PC-9 (cell line): ENCODE measurements at regions of chr2 and their contacts with region 1.

Region 1: DNA sequence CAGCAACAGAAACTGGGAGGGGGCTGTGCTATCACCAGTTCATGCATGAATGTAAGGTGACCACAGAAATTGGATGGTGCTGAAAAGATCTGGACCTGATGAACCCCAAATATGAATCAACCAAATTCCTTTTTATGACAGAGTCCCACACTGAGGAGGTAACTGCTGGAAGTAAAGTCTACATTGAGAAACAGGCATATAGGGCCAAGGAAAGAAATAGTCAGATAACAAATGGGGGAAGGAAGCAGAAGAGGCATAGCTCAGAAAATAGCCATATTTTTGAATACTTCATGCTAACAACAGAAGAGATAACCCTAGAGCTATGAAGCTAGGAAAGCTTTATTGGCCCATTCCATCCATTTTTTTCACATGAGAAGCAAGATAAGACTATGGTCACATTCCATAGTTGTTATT is 25.8 kb downstream of the ZC3H6 start:
- DNase-seq: no peak
- H3K4me3 ChIP-seq: no peak overlapping the region
- H3K27ac ChIP-seq: no peak overlapping the region
- H3K4me1 ChIP-seq: no peaks in the 10 kb centered on the region
- H3K27me3 ChIP-seq: no peaks in the 10 kb centered on the region
- CTCF ChIP-seq: no peak

Region 2: DNA sequence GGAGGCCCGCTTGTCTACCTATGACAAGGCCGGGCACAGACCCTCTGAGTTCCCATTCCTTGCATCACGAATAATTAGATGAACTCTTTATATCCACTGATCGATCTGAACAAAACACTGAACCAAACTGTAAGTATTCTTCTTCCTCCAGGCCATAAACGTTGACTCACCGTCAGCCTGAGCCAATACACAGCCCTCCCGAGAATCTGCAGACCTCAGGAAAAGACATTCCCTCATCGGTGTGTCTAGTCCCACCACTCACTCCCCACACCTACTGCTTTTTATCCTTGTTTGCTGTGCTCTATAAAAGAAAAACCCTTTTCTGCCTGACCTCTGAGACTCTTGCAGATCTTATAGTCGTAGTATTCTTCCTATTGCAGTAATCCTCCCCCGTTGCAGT is 205.1 kb before region 1 on chr2:
- CTCF ChIA-PET with region 1: no interaction called
- POLR2A ChIA-PET with region 1: interaction called, 10 read pairs
- intact Hi-C with region 1: no loop called
- DNase-seq: no peak
- H3K4me3 ChIP-seq: no peak overlapping the region
- H3K27ac ChIP-seq: no peak overlapping the region
- H3K4me1 ChIP-seq: no peaks in the 10 kb centered on the region
- H3K27me3 ChIP-seq: no peaks in the 10 kb centered on the region
- CTCF ChIP-seq: no peak

Region 3: DNA sequence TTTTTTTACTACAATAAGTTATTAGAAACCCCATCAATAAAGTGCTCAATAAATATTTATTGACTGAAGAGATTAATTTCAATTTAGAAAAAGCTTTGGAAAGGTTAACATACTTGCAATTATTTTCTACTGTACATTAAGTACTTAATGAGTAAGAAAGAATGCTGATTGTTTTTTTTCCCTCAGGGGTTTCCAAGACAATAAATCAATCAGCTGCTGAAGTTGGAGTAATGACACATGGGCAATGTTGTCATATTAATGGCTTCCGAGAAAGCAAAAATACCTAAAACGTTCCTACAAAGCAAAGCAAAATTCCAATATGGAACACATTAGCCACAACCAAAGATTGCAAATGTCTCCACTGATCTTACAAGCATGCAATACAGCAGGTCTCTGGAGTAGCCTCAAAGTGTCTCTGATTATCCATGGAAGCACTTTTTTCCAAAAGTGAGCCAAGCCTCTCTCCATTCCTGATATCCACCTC is 40.9 kb after region 1 on chr2:
- CTCF ChIA-PET with region 1: interaction called, 10 read pairs
- POLR2A ChIA-PET with region 1: no interaction called
- intact Hi-C with region 1: no loop called
- DNase-seq: no peak
- H3K4me3 ChIP-seq: no peak overlapping the region
- H3K27ac ChIP-seq: no peak overlapping the region
- H3K4me1 ChIP-seq: no peaks in the 10 kb centered on the region
- H3K27me3 ChIP-seq: no peaks in the 10 kb centered on the region
- CTCF ChIP-seq: no peak